Posterior vena cava (tissue), 2 donors: ENCODE measurements at regions of chr19 and their contacts with region 1.

Region 1: GRCh38 chr19:13861732-13862531 is 15.0 kb upstream of the NANOS3 start:
- DNase-seq: peak; percentile 98

Region 2: GRCh38 chr19:13597640-13598039 is 264.3 kb before region 1 on chr19:
- intact Hi-C with region 1: loop called in 1 of 2 experiments (anchors 5 kb)
- DNase-seq: no peak

Region 3: GRCh38 chr19:13784731-13785452 is 77.0 kb before region 1 on chr19:
- intact Hi-C with region 1: loop called (anchors 5 kb)
- DNase-seq: peak; percentile 91

Region 4: DNA sequence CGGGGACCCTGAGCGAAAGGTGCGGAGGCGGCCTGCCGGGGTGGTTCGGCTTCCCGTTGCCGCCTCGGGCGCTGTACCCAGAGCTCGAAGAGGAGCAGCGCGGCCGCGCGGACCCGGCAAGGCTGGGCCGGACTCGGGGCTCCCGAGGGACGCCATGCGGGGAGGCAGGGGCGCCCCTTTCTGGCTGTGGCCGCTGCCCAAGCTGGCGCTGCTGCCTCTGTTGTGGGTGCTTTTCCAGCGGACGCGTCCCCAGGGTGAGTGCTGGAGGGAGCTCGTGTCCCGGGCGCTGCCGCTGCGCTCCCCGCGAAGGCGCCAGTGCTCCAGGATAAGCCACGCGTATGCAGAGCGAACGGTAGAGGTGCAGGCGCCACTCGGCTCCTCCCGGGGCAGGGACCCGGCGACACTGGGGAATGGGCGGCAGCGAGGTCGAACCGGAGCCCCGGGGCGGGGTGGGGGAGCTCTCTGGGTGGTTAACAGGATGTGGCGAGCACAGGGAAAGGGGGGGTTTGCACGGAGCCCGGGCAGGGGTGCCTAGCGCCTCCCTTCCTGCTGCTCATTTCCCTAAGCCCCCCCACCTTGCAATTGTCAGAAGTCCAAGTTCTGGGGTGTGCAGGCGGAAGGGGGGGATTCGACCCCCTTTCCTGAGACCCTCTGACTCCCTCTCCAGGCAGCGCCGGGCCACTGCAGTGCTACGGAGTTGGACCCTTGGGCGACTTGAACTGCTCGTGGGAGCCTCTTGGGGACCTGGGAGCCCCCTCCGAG is 170.0 kb after region 1 on chr19 and contains the start of gene IL27RA:
- intact Hi-C with region 1: no loop called
- DNase-seq: peak; percentile 84
- total RNA-seq, gene IL27RA: 3.6 to 5.3 TPM